Left cardiac atrium (tissue), 4 donors: ENCODE measurements at regions of chr9 and their contacts with region 1.

Region 1: DNA sequence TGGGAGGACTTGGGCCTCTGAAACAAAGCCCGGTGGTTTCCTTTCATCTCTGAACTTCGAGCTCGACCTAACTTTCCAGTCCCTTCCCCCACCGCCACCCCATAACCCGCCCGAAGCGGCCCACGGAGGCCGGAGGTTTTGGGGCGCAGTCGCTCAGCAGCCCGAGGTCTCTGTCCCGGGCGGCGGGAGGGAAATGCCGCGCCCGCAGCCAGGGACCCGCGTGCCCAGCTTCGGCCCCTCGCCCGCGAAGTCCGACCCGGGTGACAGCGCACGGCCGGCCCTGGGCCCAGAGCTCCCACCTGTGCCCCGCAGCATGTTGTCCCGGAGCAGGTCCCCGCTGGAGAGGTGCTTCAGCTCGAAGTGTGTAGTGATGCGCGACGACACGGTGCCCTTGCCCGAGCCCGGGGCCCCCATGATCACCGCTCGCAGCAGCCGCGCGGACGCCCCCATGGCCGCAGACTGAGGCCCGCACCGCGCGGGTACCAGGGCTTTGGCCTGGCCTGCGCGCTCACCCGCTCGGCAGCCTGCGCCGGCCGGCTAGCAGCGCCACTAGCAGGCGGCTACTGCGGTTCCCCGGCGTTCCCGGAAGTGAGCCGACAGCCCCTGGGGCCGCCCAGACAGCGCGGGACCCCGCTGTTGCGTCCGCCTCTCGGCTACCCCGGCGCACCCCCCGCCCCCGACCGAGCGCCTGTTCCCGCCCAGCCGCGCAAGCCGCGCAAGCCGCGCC is at the start of gene AK3:
- DNase-seq: peak; percentile 92
- ATAC-seq: peak; percentile 97
- total RNA-seq, gene AK3: 91.1 to 98.8 TPM

Region 2: GRCh38 chr9:4246969-4247368 is 493.8 kb before region 1 on chr9:
- intact Hi-C with region 1: no loop called
- DNase-seq: no peak
- ATAC-seq: no peak

Region 3: DNA sequence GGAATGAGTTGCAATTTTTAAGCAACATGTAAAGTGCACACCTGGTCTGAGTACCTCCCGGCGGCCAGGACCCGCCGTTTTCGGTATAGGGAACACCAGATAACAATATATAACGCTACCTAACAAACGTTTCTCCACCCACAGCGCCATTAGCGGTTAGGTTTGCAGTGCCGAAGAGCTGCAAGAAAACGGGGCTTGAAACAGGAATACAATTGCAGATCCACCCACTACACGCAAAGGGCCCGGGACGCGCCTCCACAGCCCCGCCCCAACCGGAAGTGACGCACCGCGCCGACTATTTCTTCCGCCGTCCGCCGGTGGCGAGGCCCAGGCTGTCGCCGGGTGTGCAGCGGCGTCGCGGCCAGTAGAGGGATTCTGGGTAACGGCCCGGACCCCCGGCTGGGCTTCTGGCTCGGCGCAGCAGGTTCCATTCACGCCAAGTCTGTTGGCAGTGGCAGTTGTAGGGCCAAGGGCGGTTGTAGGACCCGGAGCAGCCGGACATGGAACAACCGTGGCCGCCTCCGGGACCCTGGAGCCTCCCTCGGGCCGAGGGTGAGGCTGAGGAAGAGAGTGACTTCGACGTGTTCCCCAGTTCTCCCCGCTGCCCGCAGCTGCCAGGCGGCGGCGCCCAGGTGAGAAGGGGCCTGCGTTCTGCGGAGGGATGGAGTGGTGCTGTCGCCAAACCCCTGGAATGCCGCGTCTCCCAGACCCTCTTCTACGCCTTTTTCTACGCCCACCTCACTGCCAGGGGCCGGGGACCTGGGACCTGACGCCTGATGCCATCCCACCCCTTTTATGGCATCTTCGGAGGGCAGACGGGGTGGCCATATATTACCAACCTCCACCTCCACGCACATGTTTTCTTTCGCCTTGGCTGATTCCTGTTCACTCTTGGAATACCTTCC is 61.3 kb before region 1 on chr9 and contains the start of gene CDC37L1:
- intact Hi-C with region 1: loop called in 1 of 2 experiments (anchors 5 kb)
- DNase-seq: peak; percentile 98
- ATAC-seq: peak; percentile 99
- total RNA-seq, gene CDC37L1: 32.5 to 41.6 TPM

Region 4: DNA sequence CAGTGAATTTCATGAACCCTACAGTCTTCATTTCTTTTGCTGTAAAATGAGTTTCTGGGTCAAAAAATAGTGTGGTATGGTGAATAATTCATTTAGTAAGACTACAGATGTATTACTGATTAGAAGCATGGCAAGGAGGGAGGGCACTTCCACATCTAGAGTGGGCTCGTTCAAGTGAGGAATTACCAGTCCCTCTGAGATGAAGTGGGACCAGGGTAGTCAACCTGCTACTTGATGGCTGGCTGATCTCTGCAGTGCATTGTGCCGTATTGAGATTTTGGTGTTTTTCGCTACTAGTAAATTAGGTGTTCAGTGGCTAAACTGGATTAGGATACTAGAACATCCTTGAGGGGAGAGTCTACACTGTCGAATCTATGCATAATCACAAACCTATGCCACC is 50.7 kb before region 1 on chr9:
- intact Hi-C with region 1: no loop called
- DNase-seq: no peak
- ATAC-seq: no peak

Region 5: GRCh38 chr9:4984621-4985385 is 244.0 kb after region 1 on chr9 and contains the start of gene JAK2:
- intact Hi-C with region 1: loop called in 1 of 2 experiments (anchors 5 kb)
- DNase-seq: peak; percentile 94
- ATAC-seq: peak; percentile 92 to 98
- total RNA-seq, gene JAK2: 11.4 to 11.8 TPM